GM10248 (cell line): ENCODE measurements at regions of chr15 and their contacts with region 1.

Region 1: DNA sequence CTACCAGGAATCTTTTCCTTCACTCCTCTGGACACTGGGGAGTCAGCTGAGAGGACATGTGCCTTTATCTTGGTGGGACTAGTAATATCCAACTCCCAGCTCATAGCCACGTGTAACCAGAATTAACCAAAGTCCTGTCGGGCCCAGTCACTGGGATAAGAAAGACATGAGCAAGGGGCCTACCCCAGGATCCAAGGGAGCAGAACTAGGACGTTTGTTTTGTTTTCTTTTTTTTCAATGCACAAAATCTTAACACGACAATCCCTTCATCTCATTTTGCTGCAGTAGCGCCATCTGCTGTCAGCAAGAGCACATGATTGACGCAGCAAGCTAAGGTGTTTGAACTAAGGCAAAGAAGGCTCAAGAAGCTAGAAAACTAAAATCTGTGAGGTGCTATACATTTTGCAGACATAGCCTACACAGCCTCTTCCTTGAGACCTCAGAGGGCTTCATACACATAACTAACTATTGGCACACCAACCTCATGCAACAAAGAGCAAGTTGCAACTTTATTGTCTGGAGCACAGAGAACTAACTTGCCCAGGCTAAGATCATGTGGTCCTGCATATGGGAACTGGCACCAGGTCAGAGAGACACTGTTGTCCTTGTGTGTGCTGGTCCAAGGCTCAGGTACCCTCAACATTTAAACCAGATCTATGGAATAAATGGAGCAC is 43.6 kb downstream of the RLBP1 start:
- DNase-seq: peak; percentile 68
- CTCF ChIP-seq: peak; percentile 86

Region 2: DNA sequence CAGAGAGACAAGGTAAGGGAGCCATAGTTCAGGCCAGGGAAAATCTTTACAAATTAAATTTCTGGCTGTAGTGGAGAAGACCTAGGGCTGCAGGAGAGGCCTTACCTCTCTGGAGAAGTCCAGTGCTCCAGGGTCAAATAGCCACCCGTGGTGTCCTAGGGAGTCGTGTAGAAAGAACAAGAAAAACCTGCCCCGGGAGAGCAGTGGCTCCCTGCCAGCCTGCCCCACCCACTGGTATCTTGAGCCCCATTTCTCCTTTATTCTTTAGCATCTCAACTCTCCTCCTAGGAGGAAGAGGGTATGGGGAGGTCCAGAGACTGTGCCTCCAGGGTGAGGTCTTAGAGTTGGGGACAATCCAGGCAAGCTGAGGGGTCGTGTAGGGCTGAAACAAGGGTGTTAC is 889.1 kb before region 1 on chr15:
- CTCF ChIA-PET with region 1: no interaction called
- POLR2A ChIA-PET with region 1: no interaction called
- DNase-seq: no peak
- CTCF ChIP-seq: no peak

Region 3: GRCh38 chr15:88401996-88402656 is 775.6 kb before region 1 on chr15:
- CTCF ChIA-PET with region 1: no interaction called
- POLR2A ChIA-PET with region 1: no interaction called
- DNase-seq: no peak
- CTCF ChIP-seq: no peak

Region 4: DNA sequence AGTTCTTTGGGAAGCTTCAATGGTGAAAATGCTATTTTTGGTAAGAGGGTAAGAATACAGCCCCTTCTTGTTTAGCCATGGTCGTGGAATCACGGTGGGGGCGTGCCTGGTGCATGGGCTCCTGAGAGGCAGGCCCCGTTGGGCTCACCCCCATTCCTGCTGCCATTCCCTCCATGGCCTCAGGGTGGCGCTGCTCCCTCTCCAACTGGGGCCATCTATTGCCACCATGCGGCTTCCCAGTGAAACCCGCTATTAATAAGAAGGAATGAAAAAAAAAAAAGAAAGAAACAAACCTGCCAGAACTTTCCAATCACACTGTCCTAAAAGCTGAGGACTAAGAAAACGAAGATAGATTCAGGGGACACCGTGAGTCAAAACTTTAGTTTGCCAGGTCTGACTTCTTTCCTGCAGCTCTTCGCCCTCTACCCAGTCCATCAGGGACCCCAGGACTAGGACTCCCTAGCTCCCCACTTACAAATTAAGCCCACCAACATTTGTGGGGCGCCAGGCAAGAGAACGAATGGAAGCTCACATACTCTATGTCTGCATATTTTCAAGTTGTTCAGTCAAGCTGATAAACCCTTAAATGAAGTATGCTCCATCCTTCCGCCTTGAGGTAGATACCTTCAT is 120.2 kb before region 1 on chr15:
- CTCF ChIA-PET with region 1: interaction called, 239 read pairs
- POLR2A ChIA-PET with region 1: no interaction called
- DNase-seq: peak; percentile 83
- CTCF ChIP-seq: peak; percentile 98

Region 5: GRCh38 chr15:89129123-89129815 is 48.5 kb before region 1 on chr15:
- CTCF ChIA-PET with region 1: interaction called, 13 read pairs
- POLR2A ChIA-PET with region 1: no interaction called
- DNase-seq: peak; percentile 62
- CTCF ChIP-seq: peak; percentile 65

Region 6: DNA sequence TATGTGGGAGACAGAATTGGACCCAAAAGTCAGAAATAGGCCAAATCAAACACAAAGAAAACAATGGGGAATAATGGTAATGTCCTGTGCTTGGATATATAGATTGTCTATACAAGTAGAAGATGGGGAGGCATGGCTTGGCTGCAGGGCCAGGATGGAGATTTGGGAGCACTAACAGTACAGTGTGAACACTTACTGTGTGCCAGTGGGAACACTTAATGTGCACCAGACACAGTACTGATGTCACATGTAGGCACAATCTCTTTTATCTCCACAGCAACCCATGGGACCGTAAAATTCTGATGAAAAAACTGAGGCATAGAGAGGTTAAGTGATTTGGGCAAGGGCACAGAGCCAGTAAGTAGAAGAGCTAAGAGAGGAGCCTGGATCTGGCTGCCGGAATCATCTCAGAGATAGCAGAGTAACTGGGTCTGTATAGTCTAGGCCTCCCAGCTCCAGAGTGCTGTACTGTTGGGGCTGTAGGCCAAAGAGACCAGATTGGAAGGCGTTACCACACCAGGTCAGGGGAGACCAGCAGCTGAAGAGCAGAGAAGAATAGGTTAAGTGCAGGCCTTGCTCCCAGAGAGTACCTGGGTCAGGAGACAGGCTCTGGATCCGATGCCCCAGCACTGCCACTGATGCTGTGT is 19.7 kb before region 1 on chr15:
- CTCF ChIA-PET with region 1: interaction called, 19 read pairs
- POLR2A ChIA-PET with region 1: no interaction called
- DNase-seq: no peak
- CTCF ChIP-seq: no peak

Region 7: DNA sequence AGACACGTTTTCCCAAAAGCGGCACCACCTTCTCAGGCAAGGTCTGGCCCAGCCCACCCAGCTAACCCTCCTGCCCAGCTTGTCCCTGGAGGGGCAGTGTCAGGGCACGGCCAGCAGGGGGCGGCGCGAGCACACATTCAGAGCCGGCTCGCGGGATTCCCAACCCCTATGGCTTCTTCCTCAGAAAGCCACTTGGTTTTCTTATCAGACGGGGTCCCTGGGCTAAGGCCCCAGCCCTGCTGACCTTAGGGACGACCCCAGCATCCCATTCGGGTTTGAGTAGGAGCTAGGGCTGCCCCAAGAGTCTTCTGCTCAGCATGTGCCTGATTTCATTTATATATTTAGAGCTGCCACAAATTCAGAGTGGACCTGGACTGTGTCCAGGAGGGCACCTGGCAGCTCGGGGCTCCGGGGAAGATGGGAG is 29.1 kb after region 1 on chr15:
- CTCF ChIA-PET with region 1: interaction called, 28 read pairs
- POLR2A ChIA-PET with region 1: no interaction called
- DNase-seq: peak; percentile 88
- CTCF ChIP-seq: peak; percentile 99

Region 8: DNA sequence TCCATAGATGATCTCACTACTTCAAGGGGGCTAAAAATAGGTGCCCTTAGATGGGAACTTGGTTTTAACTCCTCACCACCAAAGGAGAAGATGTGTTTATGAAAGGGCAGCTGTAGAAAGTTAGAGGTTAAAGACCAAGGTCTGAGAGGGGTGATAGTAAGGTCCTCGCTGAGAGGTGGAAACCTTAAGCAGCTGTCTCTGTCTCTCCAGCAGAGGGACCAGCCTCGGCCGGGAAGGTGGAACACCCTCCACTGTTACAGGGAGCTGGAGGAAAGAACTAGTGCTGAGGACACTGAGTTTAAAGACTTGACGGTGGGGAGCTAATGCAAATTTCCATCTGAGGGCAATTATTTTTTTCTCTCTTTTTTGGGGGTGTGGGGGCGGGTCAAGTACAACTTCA is 52.5 kb after region 1 on chr15:
- CTCF ChIA-PET with region 1: no interaction called
- POLR2A ChIA-PET with region 1: no interaction called
- DNase-seq: no peak
- CTCF ChIP-seq: no peak